Activated naive CD4-positive, alpha-beta T cell treated with anti-CD3 and anti-CD28 coated beads for 36 hours (primary cell): ENCODE measurements at regions of chr20 and their contacts with region 1.

Region 1: DNA sequence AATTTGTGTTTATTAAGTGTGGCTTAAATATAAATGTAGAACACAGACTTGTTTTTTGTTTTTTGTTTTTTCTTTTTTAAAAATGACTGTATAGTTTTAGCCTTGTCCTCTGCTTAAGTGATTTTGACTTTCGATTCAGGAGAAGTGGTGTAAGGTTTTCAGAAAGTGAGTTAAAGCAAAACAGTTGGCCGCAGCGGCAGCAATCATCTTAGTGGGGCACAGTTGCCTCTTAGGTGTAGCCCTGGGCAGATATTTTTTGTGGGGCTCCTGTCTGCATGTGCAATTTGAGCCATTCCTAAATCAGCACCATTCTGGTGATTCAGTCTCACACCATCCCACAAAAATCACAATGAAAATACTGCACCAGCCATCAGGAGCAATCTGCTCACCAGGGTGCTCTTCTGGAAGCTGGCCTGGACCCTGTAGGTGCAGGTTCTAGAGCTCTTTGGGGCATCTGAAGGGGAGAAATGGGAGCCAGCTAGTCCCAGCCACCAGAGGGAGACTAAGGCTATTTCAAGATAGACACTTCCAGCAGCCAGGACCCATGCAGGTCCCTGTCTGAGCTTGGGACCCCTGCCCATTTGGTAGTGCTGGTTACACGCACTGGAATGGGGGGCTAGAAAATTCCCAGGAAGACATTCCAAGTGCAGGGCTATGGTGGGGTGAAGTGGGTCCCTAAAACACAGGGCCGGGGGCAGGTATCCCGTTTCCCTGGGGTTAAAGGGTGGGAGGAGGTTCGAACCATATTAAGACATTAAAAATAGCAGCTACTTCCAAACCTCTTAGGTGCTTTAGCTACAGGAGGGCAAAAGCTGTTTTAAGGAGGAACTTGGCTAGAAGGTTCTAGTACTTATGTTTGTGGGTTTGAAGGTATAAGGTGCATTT is 156.6 kb downstream of the NFATC2 start:
- DNase-seq: peak; percentile 61
- H3K4me3 Mint-ChIP-seq: no peak overlapping the region
- H3K27ac Mint-ChIP-seq: no peak overlapping the region
- H3K4me1 Mint-ChIP-seq: peaks cover 48% of the 10 kb centered on the region
- H3K27me3 Mint-ChIP-seq: no peaks in the 10 kb centered on the region

Region 2: DNA sequence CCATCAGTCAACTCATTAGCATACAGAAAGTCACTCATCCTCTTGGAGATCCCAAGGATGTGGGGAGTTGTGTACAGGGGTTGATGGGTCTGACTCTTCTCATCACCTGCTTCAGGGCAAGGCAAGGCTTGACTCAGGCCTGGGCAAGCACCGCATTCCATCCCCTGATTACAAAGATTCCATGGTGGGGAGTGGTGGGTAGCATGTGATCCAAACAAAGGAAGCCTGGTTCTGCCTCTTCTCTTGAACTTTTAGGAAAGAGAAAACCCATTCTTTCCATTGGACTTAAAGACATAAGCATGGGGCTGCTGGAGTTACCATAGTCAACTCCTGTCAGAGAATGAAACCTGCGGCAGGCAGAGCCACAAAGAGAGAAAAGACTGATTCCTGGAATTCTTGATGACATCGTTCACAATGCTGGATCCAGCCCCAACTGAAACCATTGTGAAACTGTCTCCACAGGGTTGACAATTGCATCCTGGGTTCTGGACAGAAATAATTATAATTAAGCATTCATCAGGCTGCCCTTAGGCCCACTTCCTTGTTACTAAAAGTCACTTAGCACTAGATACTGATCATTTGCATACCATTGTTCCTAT is 127.2 kb before region 1 on chr20:
- CTCF ChIA-PET with region 1: no interaction called
- intact Hi-C with region 1: no loop called
- DNase-seq: no peak
- H3K4me3 Mint-ChIP-seq: no peak overlapping the region
- H3K27ac Mint-ChIP-seq: no peak overlapping the region
- H3K4me1 Mint-ChIP-seq: no peaks in the 10 kb centered on the region
- H3K27me3 Mint-ChIP-seq: peaks cover 11% of the 10 kb centered on the region

Region 3: DNA sequence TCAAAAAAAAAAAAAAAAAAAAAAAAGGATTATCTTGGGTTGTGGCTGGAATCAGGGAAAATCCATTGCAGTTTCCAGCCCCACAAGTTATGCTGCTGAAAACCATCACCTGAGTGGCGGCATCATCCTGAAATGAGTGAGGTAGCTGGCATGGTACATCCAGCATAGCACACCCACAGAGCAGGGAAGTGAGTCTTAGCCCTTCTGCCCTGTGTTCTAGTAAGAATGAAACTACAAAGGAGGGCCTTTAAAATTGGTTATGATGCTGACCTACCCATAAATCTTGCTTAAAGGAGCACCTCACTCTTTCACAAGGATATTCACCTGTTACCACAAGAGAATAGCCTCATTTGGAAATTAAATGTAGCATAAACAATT is 37.4 kb after region 1 on chr20:
- CTCF ChIA-PET with region 1: interaction called, 3 read pairs
- intact Hi-C with region 1: loop called (anchors 5 kb)
- DNase-seq: peak; percentile 44
- H3K4me3 Mint-ChIP-seq: no peak overlapping the region
- H3K27ac Mint-ChIP-seq: no peak overlapping the region
- H3K4me1 Mint-ChIP-seq: peaks cover 42% of the 10 kb centered on the region
- H3K27me3 Mint-ChIP-seq: no peaks in the 10 kb centered on the region